Activated T-helper 2 cell treated with anti-CD3 and anti-CD28 coated beads, Interferon-gamma antibody, Interleukin-2, Interleukin-4, amounts not matched to agents 10 μg/mL and 5 μg/mL and 100 μg/mL, durations not matched to agents 14 hours and 24 hours and 36 hours (primary cell): ENCODE measurements at regions of chr2 and their contacts with region 1.

Region 1: GRCh38 chr2:55617175-55618024 is at the start of gene PPP4R3B:
- DNase-seq: peak; percentile 99
- H3K4me3 Mint-ChIP-seq: no peak within 1 kb of the TSS
- H3K27ac Mint-ChIP-seq: no peak within 1 kb of the TSS
- H3K4me1 Mint-ChIP-seq: peaks cover 25% of the 10 kb centered on the region
- H3K27me3 Mint-ChIP-seq: no peaks in the 10 kb centered on the region
- total RNA-seq, gene PPP4R3B: 69.7 and 69.9 TPM in 2 replicates

Region 2: GRCh38 chr2:55050133-55050994 is 567.0 kb before region 1 on chr2 and contains the start of gene RTN4:
- intact Hi-C with region 1: loop called (anchors 1 kb)
- DNase-seq: peak; percentile 99
- H3K4me3 Mint-ChIP-seq: peak within 1 kb of the TSS; percentile 99
- H3K27ac Mint-ChIP-seq: peak within 1 kb of the TSS; percentile 99
- H3K4me1 Mint-ChIP-seq: peaks cover 61% of the 10 kb centered on the region
- H3K27me3 Mint-ChIP-seq: no peaks in the 10 kb centered on the region
- total RNA-seq, gene RTN4: 91.2 and 93.3 TPM in 2 replicates

Region 3: DNA sequence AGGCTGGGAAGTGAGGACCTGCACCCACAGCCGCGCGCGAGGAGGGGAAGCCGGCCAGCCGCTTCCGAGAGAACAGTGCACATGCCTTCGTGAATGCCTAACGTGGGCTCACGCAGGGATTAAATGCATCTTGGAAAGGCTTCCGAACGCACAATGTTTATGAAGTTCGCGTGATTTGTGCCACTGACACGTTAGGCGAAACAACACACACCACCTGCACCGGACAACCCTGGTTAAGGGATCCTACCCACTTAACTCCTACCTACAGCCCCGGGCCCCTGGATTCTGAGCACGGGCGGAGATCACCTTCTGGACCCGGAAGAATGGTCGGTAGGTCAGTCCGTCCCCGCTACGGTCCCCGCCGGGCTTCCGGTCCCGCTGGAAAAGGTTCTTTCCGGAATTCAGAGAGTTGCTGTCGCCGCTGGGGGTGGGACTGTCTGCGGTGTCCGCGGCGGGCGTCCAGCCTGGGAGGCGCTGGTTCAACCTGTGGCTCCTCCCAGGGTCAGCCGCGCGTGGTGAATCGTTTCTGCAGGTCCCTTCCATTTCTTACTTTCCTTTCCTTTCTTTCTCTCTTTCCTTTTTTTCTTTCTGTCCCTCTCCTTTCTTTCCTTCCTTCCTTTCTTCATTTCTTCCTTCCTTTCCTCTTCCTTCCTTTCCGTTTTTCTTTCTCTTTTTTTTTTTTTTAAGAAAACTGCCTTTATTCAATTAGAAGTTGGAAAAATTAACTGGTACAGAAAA is 348.3 kb before region 1 on chr2 and contains the start of gene MTIF2:
- intact Hi-C with region 1: loop called (anchors 1 kb)
- DNase-seq: peak; percentile 82
- H3K4me3 Mint-ChIP-seq: peak within 1 kb of the TSS; percentile 97
- H3K27ac Mint-ChIP-seq: peak within 1 kb of the TSS; percentile 92
- H3K4me1 Mint-ChIP-seq: peaks cover 15% of the 10 kb centered on the region
- H3K27me3 Mint-ChIP-seq: no peaks in the 10 kb centered on the region
- total RNA-seq, gene MTIF2: 40.2 and 42.7 TPM in 2 replicates

Region 4: DNA sequence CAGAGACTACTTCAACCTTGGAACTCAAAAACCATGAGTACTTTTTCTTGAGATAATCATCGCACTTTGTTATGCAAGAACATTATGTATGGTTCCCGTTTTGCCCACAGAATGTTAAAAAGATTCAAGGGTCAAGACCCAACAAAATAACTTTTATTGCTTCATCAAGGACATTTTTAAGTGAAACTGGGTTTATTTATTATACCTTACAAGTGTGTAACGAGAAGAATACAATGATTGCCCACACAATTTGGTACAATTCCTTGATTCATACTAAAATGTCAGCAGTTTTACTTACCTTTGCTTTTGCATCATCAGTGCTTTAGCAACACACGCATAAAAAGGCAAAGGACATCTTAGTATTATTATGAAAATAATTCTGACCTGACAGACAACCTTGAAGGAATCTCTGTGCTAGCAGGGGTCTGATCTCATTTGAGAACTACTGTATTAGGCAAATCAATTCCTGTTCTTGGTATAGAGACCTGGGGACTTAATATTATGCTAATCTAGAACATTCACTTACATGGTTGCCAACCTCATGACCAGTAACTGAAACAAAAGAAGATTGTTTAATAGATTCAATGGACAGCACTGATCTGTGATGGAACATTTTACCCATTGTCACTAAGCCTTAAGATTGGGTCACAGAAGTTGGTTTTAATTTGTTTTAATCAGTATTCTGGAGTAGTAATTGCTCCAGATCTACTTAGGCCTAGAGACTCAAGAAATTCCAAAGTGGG is 214.0 kb before region 1 on chr2:
- intact Hi-C with region 1: no loop called
- DNase-seq: no peak
- H3K4me3 Mint-ChIP-seq: no peak overlapping the region
- H3K27ac Mint-ChIP-seq: no peak overlapping the region
- H3K4me1 Mint-ChIP-seq: no peaks in the 10 kb centered on the region
- H3K27me3 Mint-ChIP-seq: no peaks in the 10 kb centered on the region

Region 5: GRCh38 chr2:55519938-55520885 is 97.2 kb before region 1 on chr2:
- intact Hi-C with region 1: loop called (anchors 1 kb)
- DNase-seq: no peak
- H3K4me3 Mint-ChIP-seq: peak overlapping the region; percentile 93
- H3K27ac Mint-ChIP-seq: peak overlapping the region; percentile 86
- H3K4me1 Mint-ChIP-seq: peaks cover 13% of the 10 kb centered on the region
- H3K27me3 Mint-ChIP-seq: no peaks in the 10 kb centered on the region

Region 6: GRCh38 chr2:55581435-55581834 is 36.0 kb before region 1 on chr2:
- intact Hi-C with region 1: loop called (anchors 5 kb)
- DNase-seq: no peak
- H3K4me3 Mint-ChIP-seq: no peak overlapping the region
- H3K27ac Mint-ChIP-seq: no peak overlapping the region
- H3K4me1 Mint-ChIP-seq: peaks cover 18% of the 10 kb centered on the region
- H3K27me3 Mint-ChIP-seq: no peaks in the 10 kb centered on the region

Region 7: DNA sequence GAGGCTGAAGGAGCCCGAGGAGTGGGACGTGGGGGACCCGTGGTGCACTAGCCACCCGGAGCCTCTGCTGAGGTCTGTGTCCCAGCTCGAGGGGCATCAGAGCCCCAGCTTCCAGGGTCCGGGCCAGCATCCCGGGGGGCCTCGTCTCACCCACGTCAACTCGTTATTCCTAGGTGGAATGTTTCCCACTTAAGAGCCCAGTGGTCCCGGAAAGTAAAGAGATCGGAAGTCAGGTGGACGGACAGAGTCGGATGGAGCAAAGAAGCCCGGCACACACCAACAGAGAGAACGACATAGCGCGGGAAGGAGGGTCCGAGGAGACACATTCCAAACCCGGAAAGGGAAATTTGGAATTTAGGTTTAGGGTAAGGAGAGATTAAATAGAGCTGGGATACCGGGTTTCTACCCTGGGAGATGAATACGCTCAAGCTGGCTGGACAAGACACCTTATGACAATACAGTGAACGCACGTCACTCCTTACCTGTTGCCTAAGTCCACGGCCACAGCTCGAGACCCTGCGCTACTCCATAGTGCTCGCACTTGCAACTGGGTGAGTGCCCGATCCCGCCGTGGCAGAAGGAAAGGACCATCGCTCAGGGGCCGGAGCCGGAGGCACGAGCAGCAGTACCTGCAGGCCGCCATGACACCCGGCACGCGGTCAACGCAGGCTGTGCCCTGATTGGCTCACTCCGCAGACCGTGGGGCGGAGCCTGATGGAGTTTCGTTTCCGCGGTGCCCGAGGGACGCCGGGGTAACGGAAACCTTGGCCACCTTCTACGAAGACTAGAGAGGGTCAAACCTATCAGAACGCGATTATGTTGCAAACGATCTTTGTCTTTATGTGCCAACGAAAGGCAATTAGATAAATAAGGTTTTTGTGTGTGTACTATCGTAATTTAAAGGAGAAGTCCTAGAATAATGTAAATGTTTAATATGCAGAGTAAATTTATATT is 76.1 kb after region 1 on chr2 and contains the start of gene PNPT1:
- intact Hi-C with region 1: loop called (anchors 1 kb)
- DNase-seq: peak; percentile 92
- H3K4me3 Mint-ChIP-seq: peak within 1 kb of the TSS; percentile 92
- H3K27ac Mint-ChIP-seq: peak within 1 kb of the TSS; percentile 80
- H3K4me1 Mint-ChIP-seq: peaks cover 30% of the 10 kb centered on the region
- H3K27me3 Mint-ChIP-seq: peaks cover 6% of the 10 kb centered on the region
- total RNA-seq, gene PNPT1: 53.5 and 54.3 TPM in 2 replicates

Region 8: GRCh38 chr2:55751966-55752365 is 134.6 kb after region 1 on chr2:
- intact Hi-C with region 1: no loop called
- DNase-seq: no peak
- H3K4me3 Mint-ChIP-seq: no peak overlapping the region
- H3K27ac Mint-ChIP-seq: no peak overlapping the region
- H3K4me1 Mint-ChIP-seq: no peaks in the 10 kb centered on the region
- H3K27me3 Mint-ChIP-seq: no peaks in the 10 kb centered on the region

Region 9: GRCh38 chr2:56369316-56369715 is 751.9 kb after region 1 on chr2:
- intact Hi-C with region 1: no loop called
- DNase-seq: no peak
- H3K4me3 Mint-ChIP-seq: no peak overlapping the region
- H3K27ac Mint-ChIP-seq: no peak overlapping the region
- H3K4me1 Mint-ChIP-seq: no peaks in the 10 kb centered on the region
- H3K27me3 Mint-ChIP-seq: no peaks in the 10 kb centered on the region